Heart left ventricle (tissue), 16 donors: ENCODE measurements at regions of chr4 and their contacts with region 1.

Region 1: DNA sequence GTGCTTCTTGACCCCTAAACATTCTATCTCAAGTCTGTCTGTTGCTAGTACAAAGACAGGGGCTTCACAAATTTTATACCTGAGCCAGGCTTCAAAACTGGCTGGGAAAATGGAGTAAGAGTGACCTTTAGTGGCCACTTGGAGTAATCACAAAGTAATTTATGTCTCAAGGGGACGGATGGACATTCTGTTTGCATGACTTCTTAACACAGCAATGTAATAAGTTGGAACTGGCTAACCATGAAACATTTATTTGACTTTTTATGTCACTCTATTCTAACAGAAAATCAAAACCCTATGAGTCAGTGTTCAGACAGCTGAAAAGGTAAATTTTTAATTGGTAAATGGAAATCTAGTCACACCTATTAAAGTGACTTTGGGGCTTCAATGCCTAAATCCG is 600.6 kb downstream of the ANKRD50 start:
- DNase-seq: peak in 1 of 5 donors; percentile 41
- ATAC-seq: peak; percentile 78 to 96 (median 87)
- H3K4me3 ChIP-seq: no peak overlapping the region
- H3K27ac ChIP-seq: peak overlapping the region in 6 of 12 donors; percentile 19 to 54 (median 32)
- H3K4me1 ChIP-seq: peaks cover 0 to 18% (median 6%) of the 10 kb centered on the region in 12 donors
- H3K27me3 ChIP-seq: no peaks in the 10 kb centered on the region
- CTCF ChIP-seq: peak; percentile 54 to 85 (median 78)
- POLR2A ChIP-seq: no peak

Region 2: DNA sequence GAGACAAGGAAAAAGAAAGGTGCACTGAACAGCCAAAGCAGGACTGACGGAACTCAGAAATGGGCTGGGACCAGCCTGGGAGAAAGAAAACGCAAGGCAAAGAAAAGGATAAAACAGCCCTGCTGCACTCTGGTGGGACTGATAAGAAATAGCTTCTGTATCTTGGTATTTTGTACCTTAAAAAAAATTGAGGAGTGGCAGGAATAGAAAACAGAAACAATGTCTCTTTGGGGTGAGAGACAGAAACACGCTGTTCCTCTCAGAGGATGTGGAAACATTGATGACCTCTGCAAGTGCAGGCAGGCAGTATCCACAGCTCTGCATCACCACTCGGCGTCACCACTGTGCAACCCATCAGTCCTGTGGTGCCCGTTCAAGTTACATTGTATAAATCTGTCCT is 867.8 kb before region 1 on chr4:
- intact Hi-C with region 1: loop called in 1 of 10 experiments (anchors 10 kb)
- DNase-seq: peak; percentile 63 to 78 (median 73)
- ATAC-seq: peak; percentile 96 to 99 (median 97)
- H3K4me3 ChIP-seq: peak overlapping the region in 1 of 12 donors; percentile 22
- H3K27ac ChIP-seq: peak overlapping the region in 5 of 12 donors; percentile 12 to 72 (median 55)
- H3K4me1 ChIP-seq: peaks cover 0 to 45% (median 26%) of the 10 kb centered on the region in 12 donors
- H3K27me3 ChIP-seq: no peaks in the 10 kb centered on the region
- CTCF ChIP-seq: peak in 10 of 12 donors; percentile 11 to 64 (median 42)
- POLR2A ChIP-seq: peak in 1 of 2 donors; percentile 17

Region 3: DNA sequence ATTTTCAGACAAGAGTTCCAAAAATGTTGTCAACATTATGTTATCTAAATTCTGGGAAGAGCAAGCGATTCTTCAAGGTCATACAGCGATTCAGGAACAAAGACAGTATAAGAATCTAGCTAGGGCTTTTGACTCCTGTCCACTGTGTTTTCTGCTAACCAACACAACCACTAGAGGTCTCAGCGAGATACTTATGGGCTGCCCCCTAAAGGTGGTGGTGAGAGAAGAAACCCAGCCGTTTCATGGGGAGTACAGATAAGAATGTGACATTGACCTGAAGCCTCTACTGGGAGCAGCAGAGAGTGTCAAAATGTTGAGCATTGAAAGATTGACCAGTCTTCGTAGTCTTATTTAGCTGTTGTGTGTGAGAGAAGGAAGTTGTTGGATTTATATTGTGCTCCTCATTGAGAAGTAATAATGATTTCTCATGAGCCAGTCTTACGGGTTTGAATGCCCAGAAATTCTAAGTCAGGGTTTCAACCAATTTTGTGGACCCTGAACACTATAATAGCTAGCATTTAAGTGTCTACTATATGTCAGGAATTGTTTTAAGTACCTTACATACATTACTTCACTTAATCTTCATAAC is 547.1 kb before region 1 on chr4:
- intact Hi-C with region 1: loop called in 5 of 10 experiments (anchors 5 to 10 kb)
- DNase-seq: peak in 3 of 5 donors; percentile 34 to 60 (median 46)
- ATAC-seq: peak; percentile 86 to 95 (median 92)
- H3K4me3 ChIP-seq: no peak overlapping the region
- H3K27ac ChIP-seq: no peak overlapping the region
- H3K4me1 ChIP-seq: peaks cover 0 to 14% (median 5%) of the 10 kb centered on the region in 12 donors
- H3K27me3 ChIP-seq: no peaks in the 10 kb centered on the region
- CTCF ChIP-seq: peak; percentile 63 to 87 (median 76)
- POLR2A ChIP-seq: no peak

Region 4: GRCh38 chr4:123661080-123661737 is 450.7 kb before region 1 on chr4:
- intact Hi-C with region 1: loop called in 4 of 10 experiments (anchors 5 to 10 kb)
- DNase-seq: no peak
- ATAC-seq: no peak
- H3K4me3 ChIP-seq: no peak overlapping the region
- H3K27ac ChIP-seq: no peak overlapping the region
- H3K4me1 ChIP-seq: peaks cover 0 to 5% (median 0%) of the 10 kb centered on the region in 12 donors
- H3K27me3 ChIP-seq: no peaks in the 10 kb centered on the region
- CTCF ChIP-seq: peak; percentile 32 to 68 (median 50)
- POLR2A ChIP-seq: no peak

Region 5: GRCh38 chr4:123833171-123833643 is 278.7 kb before region 1 on chr4:
- intact Hi-C with region 1: no loop called
- DNase-seq: no peak
- ATAC-seq: no peak
- H3K4me3 ChIP-seq: no peak overlapping the region
- H3K27ac ChIP-seq: peak overlapping the region; percentile 79 to 99 (median 89)
- H3K4me1 ChIP-seq: peaks cover 0 to 47% (median 31%) of the 10 kb centered on the region in 12 donors
- H3K27me3 ChIP-seq: no peaks in the 10 kb centered on the region
- CTCF ChIP-seq: no peak
- POLR2A ChIP-seq: no peak

Region 6: DNA sequence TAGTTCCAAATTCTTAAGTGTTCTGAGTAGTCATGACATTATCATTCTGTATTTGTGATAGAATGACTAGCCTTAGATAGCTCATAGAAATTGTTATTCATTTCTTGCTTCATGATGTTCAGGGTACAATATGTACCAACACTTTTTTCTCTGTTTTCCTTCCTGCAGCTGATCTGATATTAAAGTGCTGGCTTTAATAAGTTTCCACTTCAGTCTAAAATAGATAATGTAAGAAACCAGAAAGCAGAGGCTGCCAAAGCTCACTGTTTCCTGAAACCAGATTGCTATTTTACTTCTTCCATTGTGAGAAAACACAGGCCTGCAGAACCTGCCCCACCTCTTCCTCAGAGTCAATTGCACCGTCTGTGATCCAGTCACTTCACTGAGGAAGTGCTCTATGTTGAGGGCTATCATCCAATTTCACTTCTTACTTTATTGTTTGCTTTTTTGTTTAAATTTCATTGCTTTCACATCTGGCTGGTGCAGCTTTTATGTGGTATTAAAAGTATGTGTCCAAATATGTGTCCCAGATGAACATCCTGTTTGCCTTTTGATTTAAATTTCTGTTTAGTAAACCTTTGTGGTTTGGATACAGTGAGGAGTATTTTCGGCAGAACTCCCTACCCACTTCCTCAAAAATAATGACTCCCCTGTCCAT is 51.5 kb before region 1 on chr4:
- intact Hi-C with region 1: loop called in 2 of 10 experiments (anchors 5 kb)
- DNase-seq: peak in 4 of 5 donors; percentile 51 to 68 (median 58)
- ATAC-seq: peak; percentile 91 to 97 (median 94)
- H3K4me3 ChIP-seq: no peak overlapping the region
- H3K27ac ChIP-seq: peak overlapping the region; percentile 51 to 85 (median 80)
- H3K4me1 ChIP-seq: peaks cover 0 to 34% (median 23%) of the 10 kb centered on the region in 12 donors
- H3K27me3 ChIP-seq: no peaks in the 10 kb centered on the region
- CTCF ChIP-seq: peak in 1 of 12 donors; percentile 3
- POLR2A ChIP-seq: no peak

Region 7: DNA sequence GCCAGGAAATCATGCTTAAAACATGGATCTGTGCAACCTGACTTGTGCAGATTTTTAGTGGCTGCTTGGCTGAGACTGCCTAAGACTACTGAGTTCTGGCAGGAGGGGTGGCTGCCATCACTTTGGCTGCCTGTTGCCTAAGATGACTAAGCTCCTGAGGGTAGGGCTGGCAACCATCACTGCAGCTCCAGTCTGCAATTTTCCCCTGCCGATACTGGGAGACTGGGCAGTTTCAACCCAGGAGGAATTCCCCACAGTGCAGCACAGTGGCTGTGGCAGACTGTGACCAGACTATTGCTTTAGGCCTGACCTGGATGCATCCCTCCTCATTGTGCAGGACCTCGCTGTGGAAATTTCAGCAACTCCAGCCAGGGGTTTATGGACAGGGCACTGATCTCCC is 55.7 kb after region 1 on chr4:
- intact Hi-C with region 1: no loop called
- DNase-seq: peak in 1 of 5 donors; percentile 14
- ATAC-seq: no peak
- H3K4me3 ChIP-seq: no peak overlapping the region
- H3K27ac ChIP-seq: no peak overlapping the region
- H3K4me1 ChIP-seq: no peaks in the 10 kb centered on the region
- H3K27me3 ChIP-seq: no peaks in the 10 kb centered on the region
- CTCF ChIP-seq: no peak
- POLR2A ChIP-seq: no peak